ENCODE measurements at regions of chr5 and their contacts with region 1.

Region 1: GRCh38 chr5:60287174-60287771 is 393.7 kb upstream of the PDE4D start:
- DNase-seq: peak; percentile 17
- CTCF ChIP-seq: peak; percentile 47

Region 2: DNA sequence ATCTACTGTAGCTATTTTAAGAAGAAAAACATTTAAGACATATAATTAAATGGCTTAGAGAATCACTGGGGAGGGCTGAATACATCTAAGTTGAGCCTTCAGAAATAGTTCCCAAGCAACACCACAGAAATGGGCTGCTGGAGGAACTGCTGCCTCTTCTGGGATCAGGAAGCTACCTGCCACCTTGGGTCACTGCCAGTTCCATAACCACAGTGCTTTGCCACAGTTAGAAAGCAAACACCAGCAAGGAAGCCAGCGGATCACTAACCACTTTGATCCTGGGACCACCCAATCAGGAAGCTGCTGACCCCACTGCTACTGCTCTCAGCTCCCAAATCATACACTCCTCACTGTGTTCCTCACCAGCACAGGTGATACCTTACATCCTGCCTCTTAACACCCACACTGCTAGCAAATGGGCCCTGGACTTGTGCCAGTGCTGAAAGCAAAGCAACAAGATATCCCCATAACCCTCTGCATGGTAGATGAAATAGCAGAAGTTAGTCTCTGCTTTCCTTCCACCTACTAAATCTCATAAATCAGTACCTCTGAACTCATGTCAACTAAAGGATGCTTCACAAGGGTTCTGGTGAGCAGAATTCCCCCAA is 65.8 kb after region 1 on chr5:
- in situ Hi-C with region 1: no loop called
- DNase-seq: no peak
- CTCF ChIP-seq: no peak

Region 3: DNA sequence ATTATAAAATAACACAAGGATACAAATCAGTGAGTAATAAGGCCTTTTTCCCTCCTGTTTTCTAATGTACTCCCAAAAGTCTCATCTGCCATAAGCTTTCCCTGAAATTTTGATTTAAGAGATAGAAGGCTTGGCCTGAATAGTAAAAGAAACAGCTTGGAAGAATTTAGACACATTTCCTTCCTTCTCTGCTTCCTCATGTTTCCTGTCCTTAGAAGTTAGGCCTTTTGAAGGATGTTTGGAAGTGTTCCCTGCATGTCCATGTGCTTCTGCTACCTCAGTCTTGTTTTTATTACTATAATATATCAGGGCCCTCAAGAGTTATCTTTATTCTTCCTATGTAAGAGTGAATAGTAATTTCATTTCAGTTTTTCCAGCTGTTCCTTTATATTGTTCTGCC is 170.0 kb after region 1 on chr5:
- in situ Hi-C with region 1: no loop called
- DNase-seq: no peak
- CTCF ChIP-seq: no peak

Region 4: DNA sequence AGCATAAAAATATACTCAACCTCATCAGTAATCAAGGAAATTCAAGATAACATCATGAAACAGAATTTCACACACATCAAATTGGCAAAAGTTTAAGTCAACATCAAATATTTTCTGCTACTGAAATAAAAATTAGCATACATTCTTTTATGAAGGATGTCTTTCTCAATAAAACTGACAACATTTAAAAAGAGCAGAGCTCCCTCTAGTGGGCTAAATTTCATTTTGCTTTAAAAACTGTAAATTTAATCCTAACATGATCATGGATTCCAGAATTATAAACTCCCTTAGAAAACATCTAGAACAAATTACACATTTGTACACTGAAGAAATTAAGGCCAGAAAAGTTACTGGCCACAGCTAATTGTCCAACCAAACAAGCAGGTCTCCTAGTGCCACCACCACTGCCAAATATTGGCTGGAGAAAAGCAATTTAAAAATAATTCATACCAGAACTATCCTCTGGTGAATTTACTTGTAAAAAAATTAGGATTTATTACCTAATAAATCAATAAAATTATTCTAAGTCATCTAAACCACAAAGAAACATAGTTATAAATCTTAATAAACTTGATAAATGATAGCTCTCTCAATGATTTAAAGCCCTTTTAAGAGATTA is 381.5 kb after region 1 on chr5:
- in situ Hi-C with region 1: loop called (anchors 25 kb)
- DNase-seq: peak; percentile 28
- CTCF ChIP-seq: peak; percentile 50

Region 5: DNA sequence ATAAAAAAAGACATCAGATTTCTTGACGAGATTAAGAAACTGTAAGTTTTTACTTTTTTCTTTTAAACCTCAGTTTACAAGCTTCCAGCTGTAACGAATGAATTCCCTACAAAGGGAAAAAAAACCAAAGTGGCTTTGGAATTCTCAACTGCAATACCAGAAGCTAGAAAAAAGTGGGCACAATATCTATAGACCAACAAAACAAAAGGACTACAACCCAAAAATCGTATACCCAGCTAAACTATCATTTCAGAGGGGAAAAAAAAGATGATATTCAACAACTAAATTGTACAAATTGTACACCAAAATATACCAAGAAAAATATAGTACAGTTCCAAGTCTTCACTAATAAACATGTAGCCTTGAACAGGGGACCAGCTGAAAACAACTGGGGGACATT is 583.6 kb after region 1 on chr5:
- in situ Hi-C with region 1: no loop called
- DNase-seq: no peak
- CTCF ChIP-seq: no peak